ENCODE measurements at regions of chr5 and their contacts with region 1.

Region 1: GRCh38 chr5:148998174-148998797 is 64.6 kb downstream of the SH3TC2 start:
- DNase-seq: peak in 1 of 2 donors; percentile 14
- H3K4me3 ChIP-seq: no peak overlapping the region
- H3K27ac ChIP-seq: no peak overlapping the region
- H3K4me1 ChIP-seq: no peaks in the 10 kb centered on the region
- H3K27me3 ChIP-seq: no peaks in the 10 kb centered on the region
- CTCF ChIP-seq: peak in 5 of 6 experiments; percentile 20 to 83 (median 61)
- POLR2A ChIP-seq: no peak

Region 2: GRCh38 chr5:148730943-148731861 is 267.1 kb before region 1 on chr5:
- intact Hi-C with region 1: loop called (anchors 10 kb)
- DNase-seq: peak; percentile 61 to 75
- H3K4me3 ChIP-seq: no peak overlapping the region
- H3K27ac ChIP-seq: no peak overlapping the region
- H3K4me1 ChIP-seq: no peaks in the 10 kb centered on the region
- H3K27me3 ChIP-seq: no peaks in the 10 kb centered on the region
- CTCF ChIP-seq: peak; percentile 79 to 91 (median 85)
- POLR2A ChIP-seq: no peak

Region 3: DNA sequence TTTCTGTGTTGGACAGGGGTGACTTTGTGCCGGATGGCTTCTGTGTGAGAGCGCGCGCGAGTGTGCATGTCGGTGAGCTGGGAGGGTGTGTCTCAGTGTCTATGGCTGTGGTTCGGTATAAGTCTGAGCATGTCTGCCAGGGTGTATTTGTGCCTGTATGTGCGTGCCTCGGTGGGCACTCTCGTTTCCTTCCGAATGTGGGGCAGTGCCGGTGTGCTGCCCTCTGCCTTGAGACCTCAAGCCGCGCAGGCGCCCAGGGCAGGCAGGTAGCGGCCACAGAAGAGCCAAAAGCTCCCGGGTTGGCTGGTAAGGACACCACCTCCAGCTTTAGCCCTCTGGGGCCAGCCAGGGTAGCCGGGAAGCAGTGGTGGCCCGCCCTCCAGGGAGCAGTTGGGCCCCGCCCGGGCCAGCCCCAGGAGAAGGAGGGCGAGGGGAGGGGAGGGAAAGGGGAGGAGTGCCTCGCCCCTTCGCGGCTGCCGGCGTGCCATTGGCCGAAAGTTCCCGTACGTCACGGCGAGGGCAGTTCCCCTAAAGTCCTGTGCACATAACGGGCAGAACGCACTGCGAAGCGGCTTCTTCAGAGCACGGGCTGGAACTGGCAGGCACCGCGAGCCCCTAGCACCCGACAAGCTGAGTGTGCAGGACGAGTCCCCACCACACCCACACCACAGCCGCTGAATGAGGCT is 172.1 kb before region 1 on chr5 and contains the start of gene ADRB2:
- intact Hi-C with region 1: loop called (anchors 10 kb)
- DNase-seq: peak; percentile 85 to 92
- H3K4me3 ChIP-seq: peak within 1 kb of the TSS in 2 of 3 donors; percentile 40 to 48
- H3K27ac ChIP-seq: peak within 1 kb of the TSS; percentile 50 to 67 (median 64)
- H3K4me1 ChIP-seq: peaks cover 5 to 7% of the 10 kb centered on the region in 2 donors
- H3K27me3 ChIP-seq: no peaks in the 10 kb centered on the region
- CTCF ChIP-seq: no peak
- POLR2A ChIP-seq: peak in 1 of 2 donors; percentile 82
- total RNA-seq, gene ADRB2: 1.1 to 5.1 (median 4.2) TPM

Region 4: GRCh38 chr5:148912714-148913398 is 85.4 kb before region 1 on chr5:
- intact Hi-C with region 1: loop called (anchors 10 kb)
- DNase-seq: peak in 1 of 2 donors; percentile 39
- H3K4me3 ChIP-seq: no peak overlapping the region
- H3K27ac ChIP-seq: no peak overlapping the region
- H3K4me1 ChIP-seq: peaks cover 0 to 13% of the 10 kb centered on the region in 2 donors
- H3K27me3 ChIP-seq: no peaks in the 10 kb centered on the region
- CTCF ChIP-seq: peak in 4 of 6 experiments; percentile 11 to 47 (median 34)
- POLR2A ChIP-seq: no peak

Region 5: GRCh38 chr5:149037530-149038216 is 39.4 kb after region 1 on chr5:
- intact Hi-C with region 1: no loop called
- DNase-seq: no peak
- H3K4me3 ChIP-seq: no peak overlapping the region
- H3K27ac ChIP-seq: no peak overlapping the region
- H3K4me1 ChIP-seq: no peaks in the 10 kb centered on the region
- H3K27me3 ChIP-seq: no peaks in the 10 kb centered on the region
- CTCF ChIP-seq: no peak
- POLR2A ChIP-seq: no peak

Measured in thyroid gland (tissue), 4 donors.